MCF 10A (cell line): ENCODE measurements at regions of chr2 and their contacts with region 1.

Region 1: GRCh38 chr2:68909793-68910674 is 38.8 kb upstream of the BMP10 start:
- DNase-seq: peak; percentile 84
- H3K4me3 Mint-ChIP-seq: no peak overlapping the region
- H3K27ac Mint-ChIP-seq: no peak overlapping the region
- H3K4me1 Mint-ChIP-seq: peaks cover 18% of the 10 kb centered on the region
- H3K27me3 Mint-ChIP-seq: no peaks in the 10 kb centered on the region
- CTCF ChIP-seq: peak; percentile 89

Region 2: GRCh38 chr2:68742626-68743415 is 167.2 kb before region 1 on chr2:
- CTCF ChIA-PET with region 1: interaction called, 87 read pairs
- POLR2A ChIA-PET with region 1: interaction called, 3 read pairs
- intact Hi-C with region 1: no loop called
- DNase-seq: no peak
- H3K4me3 Mint-ChIP-seq: no peak overlapping the region
- H3K27ac Mint-ChIP-seq: no peak overlapping the region
- H3K4me1 Mint-ChIP-seq: peaks cover 23% of the 10 kb centered on the region
- H3K27me3 Mint-ChIP-seq: no peaks in the 10 kb centered on the region
- CTCF ChIP-seq: no peak

Region 3: GRCh38 chr2:68807821-68808266 is 102.2 kb before region 1 on chr2:
- CTCF ChIA-PET with region 1: interaction called, 5 read pairs
- POLR2A ChIA-PET with region 1: interaction called, 10 read pairs
- intact Hi-C with region 1: no loop called
- DNase-seq: peak; percentile 91
- H3K4me3 Mint-ChIP-seq: peak overlapping the region; percentile 27
- H3K27ac Mint-ChIP-seq: peak overlapping the region; percentile 68
- H3K4me1 Mint-ChIP-seq: peaks cover 74% of the 10 kb centered on the region
- H3K27me3 Mint-ChIP-seq: no peaks in the 10 kb centered on the region
- CTCF ChIP-seq: no peak

Region 4: GRCh38 chr2:68828887-68829708 is 80.9 kb before region 1 on chr2:
- CTCF ChIA-PET with region 1: interaction called, 7 read pairs
- POLR2A ChIA-PET with region 1: interaction called, 11 read pairs
- intact Hi-C with region 1: no loop called
- DNase-seq: peak; percentile 98
- H3K4me3 Mint-ChIP-seq: no peak overlapping the region
- H3K27ac Mint-ChIP-seq: peak overlapping the region; percentile 14
- H3K4me1 Mint-ChIP-seq: peaks cover 42% of the 10 kb centered on the region
- H3K27me3 Mint-ChIP-seq: no peaks in the 10 kb centered on the region
- CTCF ChIP-seq: no peak

Region 5: GRCh38 chr2:68837164-68837860 is 72.7 kb before region 1 on chr2:
- CTCF ChIA-PET with region 1: interaction called, 14 read pairs
- POLR2A ChIA-PET with region 1: interaction called, 4 read pairs
- intact Hi-C with region 1: loop called (anchors 5 kb)
- DNase-seq: peak; percentile 84
- H3K4me3 Mint-ChIP-seq: no peak overlapping the region
- H3K27ac Mint-ChIP-seq: no peak overlapping the region
- H3K4me1 Mint-ChIP-seq: peaks cover 4% of the 10 kb centered on the region
- H3K27me3 Mint-ChIP-seq: no peaks in the 10 kb centered on the region
- CTCF ChIP-seq: peak; percentile 68

Region 6: DNA sequence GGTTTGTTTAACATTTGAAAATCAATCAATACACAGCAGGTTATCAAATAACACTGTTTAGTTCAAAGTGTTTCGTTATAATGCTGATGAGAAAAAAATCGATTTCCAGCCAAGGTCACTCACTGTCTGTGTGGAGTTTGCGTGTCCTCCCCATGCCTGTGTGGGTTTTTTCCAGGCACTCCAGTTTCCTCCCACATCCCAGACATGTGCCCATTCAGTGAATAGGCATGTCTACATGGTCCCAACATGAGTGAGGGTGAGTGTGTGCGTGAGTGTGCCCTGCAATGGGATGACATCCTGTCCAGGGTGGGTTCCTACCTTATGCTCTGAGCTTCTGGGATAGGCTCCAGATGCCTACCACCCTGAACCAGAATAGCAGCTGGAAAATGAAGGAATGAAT is 51.3 kb after region 1 on chr2:
- CTCF ChIA-PET with region 1: no interaction called
- POLR2A ChIA-PET with region 1: no interaction called
- intact Hi-C with region 1: no loop called
- DNase-seq: no peak
- H3K4me3 Mint-ChIP-seq: no peak overlapping the region
- H3K27ac Mint-ChIP-seq: no peak overlapping the region
- H3K4me1 Mint-ChIP-seq: no peaks in the 10 kb centered on the region
- H3K27me3 Mint-ChIP-seq: no peaks in the 10 kb centered on the region
- CTCF ChIP-seq: no peak

Region 7: GRCh38 chr2:69054431-69054830 is 144.4 kb after region 1 on chr2:
- CTCF ChIA-PET with region 1: no interaction called
- POLR2A ChIA-PET with region 1: no interaction called
- intact Hi-C with region 1: no loop called
- DNase-seq: no peak
- H3K4me3 Mint-ChIP-seq: no peak overlapping the region
- H3K27ac Mint-ChIP-seq: no peak overlapping the region
- H3K4me1 Mint-ChIP-seq: peaks cover 7% of the 10 kb centered on the region
- H3K27me3 Mint-ChIP-seq: no peaks in the 10 kb centered on the region
- CTCF ChIP-seq: no peak